CD8-positive, alpha-beta memory T cell (primary cell): ENCODE measurements at regions of chr21 and their contacts with region 1.

Region 1: DNA sequence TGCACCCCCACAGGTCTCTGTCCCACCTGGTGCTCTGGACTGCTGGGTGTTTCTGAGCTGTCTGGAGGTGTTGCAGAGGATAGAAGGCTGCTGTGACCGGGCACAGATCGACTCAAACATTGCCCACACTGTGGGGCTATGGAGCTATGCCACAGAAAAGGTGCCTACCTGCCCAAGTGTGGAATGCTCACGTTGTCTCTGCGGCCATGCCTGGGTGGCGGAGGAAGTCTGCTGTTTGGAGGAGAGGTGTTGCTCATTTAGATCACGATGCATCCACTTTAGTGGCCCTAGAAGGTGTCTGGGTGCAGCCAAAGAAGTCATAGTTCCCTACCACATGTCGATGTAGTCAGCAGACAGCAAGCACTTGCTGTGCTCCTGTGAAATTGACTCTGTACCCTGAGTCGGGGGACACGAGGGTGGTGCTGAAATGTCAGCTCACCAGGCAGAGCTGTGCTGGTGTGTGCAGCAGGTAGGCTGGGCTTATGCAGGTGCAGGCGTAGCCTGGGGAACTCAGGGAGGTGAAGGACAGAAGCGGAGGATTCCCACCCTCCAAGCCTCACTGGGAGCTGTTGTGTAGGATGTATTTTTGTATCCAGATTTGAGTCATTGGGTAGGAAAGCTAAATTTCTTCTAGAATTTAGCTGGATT is 32.8 kb upstream of the PWP2 start:
- DNase-seq: peak in 4 of 5 donors; percentile 44 to 57 (median 48)
- H3K4me3 ChIP-seq: no peak overlapping the region
- H3K4me3 Mint-ChIP-seq: peak overlapping the region in 6 of 7 donors; percentile 7 to 71 (median 48)
- H3K27ac ChIP-seq: no peak overlapping the region
- H3K27ac Mint-ChIP-seq: peak overlapping the region; percentile 13 to 94 (median 87)
- H3K4me1 ChIP-seq: peaks cover 22% of the 10 kb centered on the region
- H3K4me1 Mint-ChIP-seq: peaks cover 42 to 61% (median 60%) of the 10 kb centered on the region in 3 donors
- H3K27me3 ChIP-seq: no peaks in the 10 kb centered on the region
- H3K27me3 Mint-ChIP-seq: no peaks in the 10 kb centered on the region

Region 2: GRCh38 chr21:44011980-44012527 is 62.4 kb before region 1 on chr21 and contains the start of gene TRAPPC10:
- CTCF ChIA-PET with region 1: no interaction called
- POLR2A ChIA-PET with region 1: no interaction called
- DNase-seq: peak; percentile 70 to 85 (median 78)
- H3K4me3 ChIP-seq: peak within 1 kb of the TSS; percentile 86
- H3K4me3 Mint-ChIP-seq: peak within 1 kb of the TSS; percentile 87 to 96 (median 92)
- H3K27ac ChIP-seq: peak within 1 kb of the TSS; percentile 81
- H3K27ac Mint-ChIP-seq: peak within 1 kb of the TSS; percentile 89 to 98 (median 95)
- H3K4me1 ChIP-seq: peaks cover 38% of the 10 kb centered on the region
- H3K4me1 Mint-ChIP-seq: peaks cover 45 to 55% (median 48%) of the 10 kb centered on the region in 3 donors
- H3K27me3 ChIP-seq: no peaks in the 10 kb centered on the region
- H3K27me3 Mint-ChIP-seq: no peaks in the 10 kb centered on the region
- total RNA-seq, gene TRAPPC10: 50.0 to 54.7 TPM

Region 3: GRCh38 chr21:44880762-44881585 is 806.5 kb after region 1 on chr21:
- CTCF ChIA-PET with region 1: no interaction called
- POLR2A ChIA-PET with region 1: interaction called, 12 read pairs
- DNase-seq: no peak
- H3K4me3 ChIP-seq: no peak overlapping the region
- H3K4me3 Mint-ChIP-seq: no peak overlapping the region
- H3K27ac ChIP-seq: no peak overlapping the region
- H3K27ac Mint-ChIP-seq: peak overlapping the region in 6 of 8 donors; percentile 55 to 88 (median 64)
- H3K4me1 ChIP-seq: peaks cover 24% of the 10 kb centered on the region
- H3K4me1 Mint-ChIP-seq: peaks cover 21 to 24% (median 24%) of the 10 kb centered on the region in 3 donors
- H3K27me3 ChIP-seq: no peaks in the 10 kb centered on the region
- H3K27me3 Mint-ChIP-seq: no peaks in the 10 kb centered on the region